ENCODE measurements at regions of chr7 and their contacts with region 1.

Region 1: DNA sequence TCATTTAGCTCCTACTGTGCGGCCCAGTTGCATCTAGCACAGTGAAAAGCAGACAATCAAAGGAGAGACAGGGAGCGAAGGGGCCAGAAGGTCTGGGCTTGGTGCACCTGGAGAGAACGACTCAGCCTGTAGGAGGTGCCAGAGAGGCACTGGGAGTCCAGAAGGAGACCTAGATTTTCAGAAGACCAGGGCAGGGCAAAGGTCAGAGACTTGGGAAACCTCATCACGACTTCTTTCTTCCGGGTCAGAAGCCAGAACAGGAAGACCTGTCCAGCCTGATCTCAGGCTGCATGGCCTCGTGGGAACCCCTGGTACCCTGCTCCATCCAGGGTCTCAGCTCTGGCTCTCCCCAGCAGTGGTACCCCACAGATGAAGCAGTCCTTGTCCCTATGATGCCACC is 5.2 kb downstream of the AGAP3 start:
- DNase-seq: peak; percentile 42
- H3K4me3 ChIP-seq: no peak overlapping the region
- H3K27ac ChIP-seq: no peak overlapping the region
- H3K4me1 ChIP-seq: no peaks in the 10 kb centered on the region
- CTCF ChIP-seq: peak; percentile 76

Region 2: DNA sequence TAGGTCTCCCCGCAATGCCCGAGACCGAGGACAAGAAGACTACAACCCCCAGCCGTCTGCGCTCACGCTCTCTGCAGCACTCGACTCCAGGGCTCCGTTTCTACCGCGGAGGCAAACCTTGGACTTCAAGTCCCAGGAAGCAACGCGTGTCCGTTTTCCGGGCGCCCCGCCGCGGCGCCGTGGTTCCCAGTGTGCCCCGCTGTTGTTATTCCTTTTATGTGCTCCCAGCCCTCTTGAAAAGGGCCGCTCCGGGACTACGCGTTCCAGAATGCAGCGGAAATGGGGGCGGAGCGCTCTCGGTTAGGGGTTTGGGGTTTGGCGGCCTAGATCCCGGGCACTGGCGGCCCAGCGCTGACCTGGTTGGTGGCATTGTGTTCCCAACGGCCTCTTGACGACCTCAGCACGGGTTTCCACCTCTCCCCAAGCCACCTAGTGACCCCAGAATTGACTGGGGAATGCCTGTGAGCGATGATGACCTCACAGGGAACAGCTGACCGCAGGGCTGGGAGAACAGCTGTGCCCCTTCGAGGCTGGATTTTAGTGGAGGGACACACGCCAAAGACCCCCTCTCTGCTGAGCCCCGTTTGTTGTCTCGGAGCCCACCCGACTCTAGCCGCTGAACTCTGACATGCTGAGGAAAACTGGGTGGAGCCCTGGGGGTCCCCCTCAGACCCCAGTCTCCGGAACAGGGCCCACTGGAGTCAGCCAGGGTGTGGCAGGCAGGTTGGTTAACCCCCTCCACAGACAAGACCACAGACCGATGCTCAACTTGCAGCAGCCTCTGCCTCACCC is 33.2 kb before region 1 on chr7:
- CTCF ChIA-PET with region 1: no interaction called
- POLR2A ChIA-PET with region 1: no interaction called
- intact Hi-C with region 1: no loop called
- DNase-seq: peak; percentile 99
- H3K4me3 ChIP-seq: peak overlapping the region; percentile 98
- H3K27ac ChIP-seq: peak overlapping the region; percentile 70
- H3K4me1 ChIP-seq: peaks cover 37% of the 10 kb centered on the region
- CTCF ChIP-seq: no peak

Region 3: DNA sequence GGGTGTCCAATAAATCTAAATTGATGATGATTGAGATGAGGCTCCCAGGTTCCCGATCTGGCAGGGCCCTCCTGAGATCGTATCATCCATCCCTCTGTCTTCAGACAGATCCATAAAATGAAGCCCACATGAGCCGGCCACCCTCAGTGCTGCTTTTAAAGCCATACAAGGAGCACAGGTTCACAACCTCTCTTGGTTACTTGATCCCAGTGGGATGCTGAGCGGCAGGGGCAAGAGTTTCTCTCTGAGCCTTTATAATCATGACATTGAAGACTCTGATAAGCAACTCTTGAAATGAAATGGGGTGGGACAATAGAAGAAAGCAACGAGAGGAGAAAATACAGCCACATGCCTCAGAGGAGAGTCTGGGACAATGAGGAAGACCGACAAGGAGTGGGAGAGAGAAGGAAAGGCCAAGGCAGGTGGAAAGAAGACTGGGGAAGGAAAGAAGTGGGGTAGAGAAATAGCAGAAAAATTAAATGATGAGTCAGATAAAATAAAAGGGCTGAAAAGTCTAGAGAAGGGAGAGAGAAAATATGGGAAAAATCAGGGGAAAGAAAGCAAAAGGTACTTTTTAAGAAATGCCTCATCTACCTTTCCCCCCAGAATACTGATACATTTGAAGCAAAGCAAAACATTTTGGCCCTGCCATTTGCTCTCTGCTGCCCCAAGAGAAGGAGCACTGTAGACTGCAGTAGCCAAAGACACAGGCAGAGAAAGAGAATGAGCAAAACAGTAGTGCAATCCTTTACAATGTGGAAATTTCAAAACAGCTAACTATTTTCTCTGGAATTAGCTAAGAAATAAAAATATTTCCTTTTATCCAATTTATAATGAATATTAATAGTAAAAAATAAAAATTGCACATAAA is 61.4 kb after region 1 on chr7:
- CTCF ChIA-PET with region 1: no interaction called
- POLR2A ChIA-PET with region 1: no interaction called
- intact Hi-C with region 1: loop called (anchors 10 kb)
- DNase-seq: no peak
- H3K4me3 ChIP-seq: no peak overlapping the region
- H3K27ac ChIP-seq: no peak overlapping the region
- H3K4me1 ChIP-seq: no peaks in the 10 kb centered on the region
- CTCF ChIP-seq: 0 out of 2 replicates have a peak, but pooled peaks have one; percentile 14

Measured in OCI-LY7 (cell line).